ENCODE measurements at regions of chr2 and their contacts with region 1.

Region 1: GRCh38 chr2:9142551-9143263 is 63.9 kb upstream of the ASAP2 start:
- DNase-seq: peak; percentile 56 to 95
- H3K4me3 ChIP-seq: peak overlapping the region; percentile 2 to 38
- H3K27ac ChIP-seq: peak overlapping the region; percentile 74 to 82
- H3K4me1 ChIP-seq: peaks cover 0 to 14% of the 10 kb centered on the region in 2 donors
- H3K27me3 ChIP-seq: no peaks in the 10 kb centered on the region
- CTCF ChIP-seq: peak; percentile 98 to 99 (median 98)

Region 2: DNA sequence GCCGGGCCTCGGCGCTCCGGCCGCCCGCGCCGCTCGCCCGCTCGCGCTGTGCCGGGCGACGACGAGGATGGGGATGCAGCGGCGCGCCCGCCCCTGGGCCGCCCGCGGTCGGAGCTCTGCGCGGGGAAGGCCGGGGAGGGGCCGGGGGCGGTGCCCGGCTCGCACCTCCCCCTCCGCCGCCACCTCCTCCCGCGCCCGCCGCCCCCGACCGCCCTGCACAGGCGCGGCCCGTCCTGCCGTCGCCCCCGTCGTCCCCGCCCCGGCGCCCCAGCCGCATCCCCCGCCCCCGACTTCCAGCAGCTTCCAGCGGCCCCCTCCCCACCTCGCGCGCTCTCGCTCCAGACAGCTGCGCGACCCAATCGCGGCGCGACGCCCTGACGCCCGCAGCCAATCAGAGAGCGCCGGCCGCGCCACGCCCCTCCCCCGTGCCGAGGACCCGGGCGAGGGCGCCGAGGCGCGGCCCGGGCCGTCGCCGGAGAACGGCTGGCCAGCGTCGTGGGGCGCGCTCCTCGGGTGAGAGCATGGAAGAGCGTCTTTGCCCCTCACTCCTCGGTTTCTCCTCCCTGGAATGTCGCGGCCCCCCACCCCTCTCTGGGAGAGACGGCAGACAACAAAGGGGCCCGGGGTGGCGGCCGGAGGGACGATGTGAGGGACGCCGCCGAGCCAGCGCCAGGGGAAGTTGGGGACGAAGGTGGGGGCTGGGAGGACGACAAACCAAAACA is 138.9 kb before region 1 on chr2 and contains the start of gene MBOAT2:
- intact Hi-C with region 1: loop called (anchors 5 kb)
- DNase-seq: peak; percentile 14 to 88
- H3K4me3 ChIP-seq: peak within 1 kb of the TSS; percentile 80 to 97
- H3K27ac ChIP-seq: peak within 1 kb of the TSS; percentile 85 to 93
- H3K4me1 ChIP-seq: peaks cover 0 to 9% of the 10 kb centered on the region in 2 donors
- H3K27me3 ChIP-seq: no peaks in the 10 kb centered on the region
- CTCF ChIP-seq: no peak
- total RNA-seq, gene MBOAT2: 8.0 TPM

Region 3: DNA sequence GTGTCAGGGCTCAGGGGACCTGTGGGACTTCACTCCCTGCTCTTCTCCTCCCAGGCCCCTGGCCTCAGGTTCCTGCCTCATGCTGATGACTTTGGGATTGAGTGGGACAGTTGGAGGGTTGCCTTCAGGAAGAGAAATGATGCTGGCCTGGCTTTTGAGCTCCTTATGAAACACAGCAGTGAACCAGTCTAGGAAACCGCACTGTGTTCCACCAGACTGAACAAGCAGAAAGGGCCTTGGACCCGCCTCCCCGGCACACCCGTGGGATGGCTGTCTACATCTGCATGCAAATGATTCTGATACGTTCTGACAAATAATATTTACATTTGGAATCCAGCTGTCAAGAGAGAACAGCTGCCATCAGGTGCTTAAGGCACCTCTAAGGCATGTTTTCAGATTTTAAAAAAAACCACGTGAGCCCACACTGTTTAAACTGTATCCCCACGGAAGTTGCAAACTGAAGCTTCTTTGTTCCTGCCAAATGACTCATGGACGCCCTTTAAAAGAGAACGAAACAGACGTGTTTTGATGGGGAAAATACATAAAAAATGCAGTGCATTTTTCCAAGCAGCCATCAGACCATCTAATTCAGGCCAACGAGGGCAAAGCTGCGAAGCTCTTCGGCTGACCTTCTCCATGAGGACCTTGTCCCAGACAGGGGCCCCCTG is 36.3 kb after region 1 on chr2:
- intact Hi-C with region 1: loop called (anchors 5 kb)
- DNase-seq: peak; percentile 44 to 91
- H3K4me3 ChIP-seq: peak overlapping the region in 1 of 2 donors; percentile 23
- H3K27ac ChIP-seq: peak overlapping the region; percentile 91 to 96
- H3K4me1 ChIP-seq: peaks cover 11 to 28% of the 10 kb centered on the region in 2 donors
- H3K27me3 ChIP-seq: no peaks in the 10 kb centered on the region
- CTCF ChIP-seq: no peak

Region 4: GRCh38 chr2:9234680-9235387 is 92.1 kb after region 1 on chr2:
- intact Hi-C with region 1: loop called (anchors 10 kb)
- DNase-seq: peak in 1 of 2 donors; percentile 82
- H3K4me3 ChIP-seq: peak overlapping the region in 1 of 2 donors; percentile 36
- H3K27ac ChIP-seq: peak overlapping the region; percentile 92 to 97
- H3K4me1 ChIP-seq: peaks cover 37 to 97% of the 10 kb centered on the region in 2 donors
- H3K27me3 ChIP-seq: no peaks in the 10 kb centered on the region
- CTCF ChIP-seq: no peak

Region 5: DNA sequence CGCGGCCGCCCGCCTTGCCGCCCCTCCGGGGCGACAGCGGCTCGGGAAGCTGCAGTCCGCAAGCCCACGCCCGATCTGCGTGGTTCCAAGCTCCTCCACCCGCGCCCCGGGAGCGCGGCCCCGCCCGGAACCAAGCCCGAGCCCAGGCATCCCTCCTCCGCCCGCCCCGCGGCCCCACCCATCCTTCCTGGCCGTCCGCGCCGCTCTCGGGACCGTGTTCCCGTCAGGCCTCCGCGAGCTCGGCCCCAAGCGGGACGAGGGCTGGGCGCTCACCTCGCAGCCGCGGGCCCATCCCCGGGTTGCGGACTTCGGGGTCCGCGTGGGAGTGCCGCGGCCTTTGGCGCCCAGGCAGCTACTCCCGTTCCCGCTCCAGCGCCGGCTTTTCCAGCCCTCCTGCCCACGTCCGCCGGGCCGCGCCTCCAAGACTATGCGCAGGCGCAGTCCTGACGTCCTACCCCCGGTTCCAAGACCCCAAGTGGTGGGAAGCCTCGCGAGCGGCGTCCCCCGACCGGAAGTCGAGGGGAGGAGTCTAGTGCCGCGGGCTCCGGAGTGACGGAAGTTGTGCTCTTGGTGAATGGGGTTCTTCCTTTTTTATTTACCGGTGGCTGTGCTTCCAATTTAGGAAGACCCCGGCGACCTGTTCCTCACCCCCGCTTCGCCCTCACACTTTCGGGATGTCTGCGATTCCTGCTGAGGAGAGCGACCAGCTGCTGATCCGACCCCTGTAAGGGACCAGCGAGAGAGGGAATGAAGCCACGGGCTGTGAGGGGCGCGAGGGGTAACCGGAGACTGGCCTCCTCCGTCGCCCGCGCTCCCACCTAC is 280.6 kb after region 1 on chr2 and contains the starts of genes CPSF3 and ITGB1BP1:
- intact Hi-C with region 1: loop called (anchors 2 kb)
- DNase-seq: peak; percentile 85 to 98
- H3K4me3 ChIP-seq: peak within 1 kb of the TSS; percentile 83 to 93
- H3K27ac ChIP-seq: peak within 1 kb of the TSS; percentile 91 to 94
- H3K4me1 ChIP-seq: peaks cover 7 to 33% of the 10 kb centered on the region in 2 donors
- H3K27me3 ChIP-seq: no peaks in the 10 kb centered on the region
- CTCF ChIP-seq: no peak
- total RNA-seq, gene CPSF3: 5.3 TPM
- total RNA-seq, gene ITGB1BP1: 25.4 TPM

Measured in ascending aorta (tissue), 2 donors.